Stomach (tissue), 19 donors: ENCODE measurements at regions of chr2 and their contacts with region 1.

Region 1: DNA sequence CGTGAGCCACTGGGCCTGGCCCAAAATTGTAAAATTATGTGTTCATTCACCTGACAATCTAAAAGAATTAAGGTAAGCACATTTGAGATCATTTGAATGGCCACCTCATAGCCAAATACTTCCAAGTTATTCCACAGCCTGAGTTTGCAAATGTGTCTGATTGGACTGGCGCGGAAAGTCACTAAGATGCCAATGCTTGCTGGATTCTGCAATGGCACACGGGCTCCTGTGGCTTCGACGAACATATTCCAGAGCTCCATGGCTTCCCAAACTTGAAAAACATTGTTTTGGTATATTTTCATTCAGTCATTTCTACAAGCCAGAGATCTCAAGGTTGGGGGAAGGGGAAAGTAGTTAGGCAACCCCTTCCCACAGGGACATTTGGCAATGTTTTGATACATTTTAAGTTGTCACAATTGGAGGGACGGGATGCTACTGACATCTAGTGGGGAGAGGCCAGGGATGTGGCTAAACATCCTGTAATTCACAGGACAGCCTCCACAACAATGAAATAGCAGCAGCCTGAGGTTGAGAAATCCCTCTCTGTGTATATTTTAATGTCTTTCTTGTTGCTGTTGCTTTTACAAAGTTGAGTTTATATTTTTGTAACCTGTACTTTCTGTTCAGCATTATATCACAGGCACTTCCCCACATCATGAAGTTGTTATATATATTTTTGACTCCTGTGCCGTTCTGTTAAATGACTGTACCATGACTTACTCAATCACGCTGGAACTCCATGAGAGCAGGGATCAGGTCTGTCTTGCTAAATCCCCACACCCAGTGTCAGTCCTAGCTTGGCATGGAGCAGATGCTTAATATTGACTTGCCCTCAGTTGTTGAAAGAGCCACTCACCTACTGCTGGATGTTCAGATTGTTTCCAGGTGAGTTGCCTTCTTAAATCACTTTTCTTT is 56.9 kb downstream of the COL4A4 start:
- DNase-seq: peak; percentile 47 to 83
- H3K4me3 ChIP-seq: no peak overlapping the region
- H3K27ac ChIP-seq: no peak overlapping the region
- H3K4me1 ChIP-seq: no peaks in the 10 kb centered on the region
- H3K27me3 ChIP-seq: no peaks in the 10 kb centered on the region
- CTCF ChIP-seq: peak in 5 of 7 experiments; percentile 48 to 68 (median 53)
- EP300 ChIP-seq: no peak
- POLR2A ChIP-seq: no peak

Region 2: DNA sequence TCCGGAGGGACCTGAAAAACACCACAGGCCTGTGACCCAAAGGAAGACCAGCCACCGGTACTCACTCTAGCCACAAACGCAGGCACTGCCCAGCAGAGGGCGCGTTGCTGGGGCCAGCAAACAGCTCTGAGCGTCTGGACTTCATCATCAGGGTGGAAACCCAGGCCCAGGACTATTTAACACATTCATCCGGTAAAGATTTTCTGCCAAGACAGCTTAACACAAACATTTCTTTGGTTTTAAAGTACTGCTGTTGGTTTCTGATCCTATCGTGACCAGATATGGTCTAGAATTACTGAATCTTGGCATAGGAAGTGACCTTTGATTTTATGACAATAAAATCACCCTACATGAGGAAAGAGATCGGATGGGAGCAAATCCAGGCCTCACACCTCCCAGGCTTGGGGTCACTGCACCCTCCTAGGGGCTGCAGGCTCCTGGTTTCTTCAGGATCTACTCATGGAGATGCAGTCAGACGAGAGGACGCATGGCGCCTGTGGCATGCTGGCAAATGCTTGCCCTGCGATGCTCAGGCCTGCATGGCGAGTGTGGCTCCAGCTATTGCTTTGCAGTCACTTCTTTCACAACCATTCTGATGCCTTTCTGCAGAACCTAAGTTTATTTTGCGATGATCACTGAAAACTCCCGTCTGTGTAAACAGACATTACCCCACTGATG is 73.5 kb before region 1 on chr2:
- intact Hi-C with region 1: loop called (anchors 10 kb)
- DNase-seq: peak; percentile 70 to 87
- H3K4me3 ChIP-seq: no peak overlapping the region
- H3K27ac ChIP-seq: no peak overlapping the region
- H3K4me1 ChIP-seq: peaks cover 0 to 13% (median 7%) of the 10 kb centered on the region in 4 donors
- H3K27me3 ChIP-seq: no peaks in the 10 kb centered on the region
- CTCF ChIP-seq: peak in 5 of 7 experiments; percentile 39 to 60 (median 55)
- EP300 ChIP-seq: no peak
- POLR2A ChIP-seq: no peak

Region 3: GRCh38 chr2:227057060-227057459 is 50.0 kb before region 1 on chr2:
- intact Hi-C with region 1: no loop called
- DNase-seq: no peak
- H3K4me3 ChIP-seq: no peak overlapping the region
- H3K27ac ChIP-seq: no peak overlapping the region
- H3K4me1 ChIP-seq: peaks cover 0 to 18% (median 11%) of the 10 kb centered on the region in 4 donors
- H3K27me3 ChIP-seq: no peaks in the 10 kb centered on the region
- CTCF ChIP-seq: no peak
- EP300 ChIP-seq: no peak
- POLR2A ChIP-seq: no peak

Region 4: GRCh38 chr2:227228061-227228667 is 121.1 kb after region 1 on chr2:
- intact Hi-C with region 1: no loop called
- DNase-seq: peak; percentile 39 to 52
- H3K4me3 ChIP-seq: no peak overlapping the region
- H3K27ac ChIP-seq: no peak overlapping the region
- H3K4me1 ChIP-seq: peaks cover 0 to 3% (median 0%) of the 10 kb centered on the region in 4 donors
- H3K27me3 ChIP-seq: no peaks in the 10 kb centered on the region
- CTCF ChIP-seq: no peak
- EP300 ChIP-seq: no peak
- POLR2A ChIP-seq: no peak

Region 5: DNA sequence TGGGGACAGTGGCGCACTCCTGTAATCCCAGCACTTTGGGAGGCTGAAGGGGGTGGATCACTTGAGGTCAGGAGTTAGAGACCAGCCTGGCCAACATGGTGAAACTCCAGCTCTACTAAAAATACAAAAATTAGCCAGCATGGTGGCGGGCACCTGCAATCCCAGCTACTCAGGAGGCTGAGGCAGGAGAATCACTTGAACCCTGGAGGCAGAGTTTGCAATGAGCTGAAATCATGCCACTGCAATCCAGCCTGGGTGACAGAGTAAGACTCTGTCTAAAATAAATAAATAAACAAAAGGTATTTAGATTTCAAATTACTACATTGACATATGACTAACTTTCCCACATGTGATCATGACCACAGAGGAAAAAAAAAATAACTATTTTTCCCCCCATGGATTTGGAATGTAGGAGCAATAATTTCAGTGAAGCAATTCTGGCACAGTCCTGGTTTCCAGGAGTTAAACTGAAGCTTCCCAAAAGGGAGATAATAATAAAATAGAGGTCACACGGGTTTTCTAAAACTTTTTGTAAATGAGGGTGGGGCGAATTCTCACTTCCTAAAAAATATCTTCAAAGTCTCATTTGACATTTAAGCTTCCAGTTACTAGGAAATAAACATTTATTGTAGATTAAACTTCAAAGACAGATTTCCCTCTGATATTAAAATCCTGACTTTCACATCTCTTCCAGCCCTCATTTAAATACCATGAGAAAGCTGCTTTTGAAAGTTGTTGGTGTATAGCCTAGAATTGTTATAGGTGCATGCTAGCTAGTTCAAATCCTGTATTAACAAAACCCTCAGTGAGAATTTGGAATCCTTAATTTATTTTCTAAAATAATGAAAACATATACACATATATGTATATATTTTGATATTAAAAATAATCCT is 589.9 kb after region 1 on chr2:
- intact Hi-C with region 1: no loop called
- DNase-seq: no peak
- H3K4me3 ChIP-seq: no peak overlapping the region
- H3K27ac ChIP-seq: no peak overlapping the region
- H3K4me1 ChIP-seq: no peaks in the 10 kb centered on the region
- H3K27me3 ChIP-seq: no peaks in the 10 kb centered on the region
- CTCF ChIP-seq: no peak
- EP300 ChIP-seq: no peak
- POLR2A ChIP-seq: no peak

Region 6: DNA sequence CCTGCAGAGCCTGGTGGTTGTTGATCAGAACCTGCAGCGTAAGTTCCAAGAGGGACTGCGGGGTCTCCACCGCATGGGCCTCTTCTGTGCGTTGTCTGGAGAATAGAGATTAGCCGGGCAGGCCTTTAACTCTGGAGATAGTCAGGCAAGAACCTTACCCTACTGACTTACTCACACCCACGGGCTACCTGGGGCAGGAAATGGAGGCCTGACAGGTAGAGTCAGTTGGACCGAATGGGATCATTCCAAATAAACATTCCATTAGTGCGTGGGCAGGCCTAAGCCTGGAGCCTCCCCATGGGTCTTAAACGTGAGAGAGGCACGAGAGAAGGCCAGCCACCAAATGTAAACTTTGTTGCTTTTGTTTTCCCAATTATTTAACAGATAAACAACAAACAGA is 637.2 kb after region 1 on chr2:
- intact Hi-C with region 1: no loop called
- DNase-seq: no peak
- H3K4me3 ChIP-seq: no peak overlapping the region
- H3K27ac ChIP-seq: no peak overlapping the region
- H3K4me1 ChIP-seq: no peaks in the 10 kb centered on the region
- H3K27me3 ChIP-seq: no peaks in the 10 kb centered on the region
- CTCF ChIP-seq: no peak
- EP300 ChIP-seq: no peak
- POLR2A ChIP-seq: no peak